Gastrocnemius medialis (tissue), 4 donors: ENCODE measurements at regions of chr12 and their contacts with region 1.

Region 1: DNA sequence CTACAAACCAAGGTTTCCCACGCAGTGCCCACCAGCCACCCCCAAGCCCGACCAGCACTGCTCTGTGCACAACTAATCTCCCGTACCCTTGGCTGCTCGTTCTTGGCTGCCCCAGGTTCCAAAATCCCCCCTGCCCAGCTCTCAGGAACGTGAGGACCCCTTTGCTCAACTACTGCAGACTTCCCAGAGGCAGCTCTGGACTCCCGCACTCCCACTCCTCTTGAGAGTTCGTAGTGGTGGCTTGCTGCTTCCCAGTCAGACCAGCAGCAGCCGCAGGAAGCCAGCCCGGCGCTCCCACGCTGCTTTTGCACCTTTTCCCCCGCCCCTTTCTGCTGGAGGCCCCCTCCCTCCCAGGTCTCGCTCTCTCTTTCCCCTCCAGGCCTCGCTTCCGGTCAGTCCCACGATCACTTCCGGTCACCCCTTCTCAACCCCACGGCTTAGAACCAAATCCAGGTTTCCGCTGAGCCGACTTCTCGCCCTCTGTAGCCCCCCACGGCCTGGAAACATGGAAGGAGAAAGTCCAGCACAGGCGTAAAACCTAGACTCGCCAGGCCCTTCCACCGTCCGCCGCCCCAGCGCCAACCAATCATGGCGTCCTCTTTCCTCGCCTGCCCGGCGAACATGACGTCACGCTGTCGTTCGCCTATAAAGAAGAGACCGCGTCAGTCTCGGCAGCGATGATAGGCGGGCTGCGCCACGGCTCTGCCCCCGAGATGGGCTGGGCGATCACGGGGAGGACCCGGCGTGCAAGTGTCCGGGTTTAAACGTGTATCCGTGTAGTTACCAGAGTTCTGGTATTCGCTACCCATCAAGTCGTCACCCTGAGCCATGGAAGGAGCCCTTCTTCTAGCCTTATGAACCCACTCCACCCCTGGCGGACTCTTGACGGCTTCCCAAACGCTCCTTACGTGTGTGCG is at the start of gene TFCP2:
- DNase-seq: peak; percentile 96 to 97
- ATAC-seq: peak; percentile 98
- H3K4me3 ChIP-seq: peak within 1 kb of the TSS; percentile 79 to 92 (median 88)
- H3K27ac ChIP-seq: peak within 1 kb of the TSS; percentile 93 to 99 (median 96)
- H3K4me1 ChIP-seq: peaks cover 28 to 30% of the 10 kb centered on the region in 2 donors
- H3K27me3 ChIP-seq: no peaks in the 10 kb centered on the region
- CTCF ChIP-seq: no peak
- POLR2A ChIP-seq: peak; percentile 61 to 82
- total RNA-seq, gene TFCP2: 8.9 to 14.2 (median 10.8) TPM

Region 2: GRCh38 chr12:51047655-51048540 is 124.9 kb before region 1 on chr12 and contains the start of gene LETMD1:
- in situ Hi-C with region 1: no loop called
- intact Hi-C with region 1: loop called (anchors 1 kb)
- DNase-seq: peak; percentile 97 to 98
- ATAC-seq: peak; percentile 99
- H3K4me3 ChIP-seq: peak within 1 kb of the TSS; percentile 79 to 95 (median 81)
- H3K27ac ChIP-seq: peak within 1 kb of the TSS; percentile 88 to 99 (median 98)
- H3K4me1 ChIP-seq: peaks cover 22 to 30% of the 10 kb centered on the region in 2 donors
- H3K27me3 ChIP-seq: no peaks in the 10 kb centered on the region
- CTCF ChIP-seq: peak; percentile 87 to 98 (median 92)
- POLR2A ChIP-seq: peak; percentile 77 to 79
- total RNA-seq, gene LETMD1: 22.5 to 42.4 (median 29.8) TPM

Region 3: DNA sequence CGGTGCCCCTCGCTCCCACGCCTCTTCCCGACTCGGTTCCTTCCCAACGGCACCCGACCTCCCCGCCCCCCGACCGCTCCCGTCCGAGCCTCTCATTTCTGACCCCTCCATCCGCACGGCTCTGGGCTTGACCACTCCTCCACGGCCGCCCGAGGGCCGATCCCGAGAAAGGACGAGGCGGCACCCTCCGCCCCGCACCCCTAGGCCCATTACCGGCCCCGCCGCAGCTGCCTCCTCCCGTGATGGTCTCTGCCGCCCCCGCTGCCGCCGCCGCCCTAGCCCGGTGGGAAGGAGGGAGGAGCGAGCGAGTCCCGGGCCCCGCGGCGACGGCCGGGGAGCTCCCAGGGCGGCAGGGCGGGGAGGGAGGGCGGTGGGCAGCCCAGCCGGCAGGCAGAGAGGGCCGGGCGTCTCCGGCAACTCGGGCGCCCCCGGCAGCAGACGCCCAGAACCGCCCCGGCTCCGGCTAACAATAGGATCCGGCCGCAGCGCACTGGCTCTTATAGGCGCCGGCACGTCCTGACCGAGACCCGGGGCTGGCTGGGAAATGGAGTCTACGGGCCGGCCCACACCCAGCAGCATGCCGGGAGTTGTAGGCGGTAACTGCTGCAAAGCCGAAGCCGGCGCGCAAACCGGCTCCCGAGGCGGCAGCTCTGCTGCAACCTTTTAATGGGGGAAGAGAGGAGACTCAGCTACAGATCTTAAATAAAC is 89.5 kb before region 1 on chr12 and contains the start of gene CSRNP2:
- in situ Hi-C with region 1: no loop called
- intact Hi-C with region 1: loop called (anchors 5 kb)
- DNase-seq: peak; percentile 96
- ATAC-seq: peak; percentile 94 to 96
- H3K4me3 ChIP-seq: peak within 1 kb of the TSS; percentile 91 to 98 (median 94)
- H3K27ac ChIP-seq: peak within 1 kb of the TSS; percentile 87 to 97 (median 94)
- H3K4me1 ChIP-seq: peaks cover 17 to 28% of the 10 kb centered on the region in 2 donors
- H3K27me3 ChIP-seq: no peaks in the 10 kb centered on the region
- CTCF ChIP-seq: peak in 1 of 5 experiments; percentile 12
- POLR2A ChIP-seq: peak; percentile 100
- total RNA-seq, gene CSRNP2: 17.3 to 29.5 (median 22.0) TPM

Region 4: GRCh38 chr12:51127050-51127729 is 45.6 kb before region 1 on chr12:
- in situ Hi-C with region 1: no loop called
- intact Hi-C with region 1: loop called (anchors 10 kb)
- DNase-seq: no peak
- ATAC-seq: no peak
- H3K4me3 ChIP-seq: no peak overlapping the region
- H3K27ac ChIP-seq: no peak overlapping the region
- H3K4me1 ChIP-seq: peaks cover 26 to 32% of the 10 kb centered on the region in 2 donors
- H3K27me3 ChIP-seq: no peaks in the 10 kb centered on the region
- CTCF ChIP-seq: no peak
- POLR2A ChIP-seq: no peak

Region 5: DNA sequence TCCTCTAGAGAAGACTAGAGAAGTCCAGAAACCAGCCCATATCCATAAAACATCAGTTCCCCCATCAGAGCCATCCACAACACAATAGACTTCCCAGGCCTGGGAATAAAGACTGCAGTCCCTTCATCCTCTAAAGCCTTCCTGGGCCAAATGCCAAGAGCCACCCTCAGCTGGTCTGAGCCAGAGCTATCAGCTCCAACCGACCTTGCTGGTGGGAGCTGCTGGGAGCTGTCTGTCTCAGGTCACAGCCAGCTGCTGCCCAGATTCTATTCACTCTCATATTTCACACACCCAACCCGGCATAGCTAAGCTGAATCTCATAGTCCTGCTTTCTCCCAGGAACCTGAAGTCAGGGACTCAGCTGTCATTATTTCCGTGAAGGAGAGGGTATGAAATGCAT is 11.0 kb after region 1 on chr12:
- in situ Hi-C with region 1: no loop called
- intact Hi-C with region 1: loop called (anchors 1 kb)
- DNase-seq: peak; percentile 56 to 85
- ATAC-seq: peak; percentile 82 to 89
- H3K4me3 ChIP-seq: no peak overlapping the region
- H3K27ac ChIP-seq: peak overlapping the region; percentile 62 to 77 (median 70)
- H3K4me1 ChIP-seq: peaks cover 18 to 36% of the 10 kb centered on the region in 2 donors
- H3K27me3 ChIP-seq: no peaks in the 10 kb centered on the region
- CTCF ChIP-seq: no peak
- POLR2A ChIP-seq: peak in 1 of 2 donors; percentile 21

Region 6: GRCh38 chr12:51217968-51218606 is 45.3 kb after region 1 on chr12 and contains the start of gene POU6F1:
- in situ Hi-C with region 1: no loop called
- intact Hi-C with region 1: loop called (anchors 1 kb)
- DNase-seq: peak; percentile 52 to 77
- ATAC-seq: peak; percentile 87 to 88
- H3K4me3 ChIP-seq: peak within 1 kb of the TSS; percentile 85 to 98 (median 89)
- H3K27ac ChIP-seq: peak within 1 kb of the TSS; percentile 98 to 100 (median 99)
- H3K4me1 ChIP-seq: peaks cover 17 to 19% of the 10 kb centered on the region in 2 donors
- H3K27me3 ChIP-seq: no peaks in the 10 kb centered on the region
- CTCF ChIP-seq: peak; percentile 31 to 92 (median 65)
- POLR2A ChIP-seq: peak; percentile 68 to 74
- total RNA-seq, gene POU6F1: 8.1 to 11.1 (median 9.9) TPM

Region 7: GRCh38 chr12:51238510-51239334 is 65.9 kb after region 1 on chr12 and contains the start of gene DAZAP2:
- in situ Hi-C with region 1: loop called in 1 of 4 experiments (anchors 10 kb)
- intact Hi-C with region 1: loop called (anchors 1 kb)
- DNase-seq: peak; percentile 94 to 97
- ATAC-seq: peak; percentile 94 to 96
- H3K4me3 ChIP-seq: peak within 1 kb of the TSS; percentile 94 to 100 (median 97)
- H3K27ac ChIP-seq: peak within 1 kb of the TSS; percentile 98 to 100 (median 100)
- H3K4me1 ChIP-seq: peaks cover 19 to 26% of the 10 kb centered on the region in 2 donors
- H3K27me3 ChIP-seq: no peaks in the 10 kb centered on the region
- CTCF ChIP-seq: peak; percentile 6 to 49 (median 17)
- POLR2A ChIP-seq: peak; percentile 92 to 98
- total RNA-seq, gene DAZAP2: 204 to 274 (median 246) TPM